ENCODE measurements at regions of chr6 and their contacts with region 1.

Region 1: GRCh38 chr6:113858480-113859348 is 1.6 kb downstream of the MARCKS start:
- DNase-seq: peak; percentile 95
- CTCF ChIP-seq: peak; percentile 93

Region 2: DNA sequence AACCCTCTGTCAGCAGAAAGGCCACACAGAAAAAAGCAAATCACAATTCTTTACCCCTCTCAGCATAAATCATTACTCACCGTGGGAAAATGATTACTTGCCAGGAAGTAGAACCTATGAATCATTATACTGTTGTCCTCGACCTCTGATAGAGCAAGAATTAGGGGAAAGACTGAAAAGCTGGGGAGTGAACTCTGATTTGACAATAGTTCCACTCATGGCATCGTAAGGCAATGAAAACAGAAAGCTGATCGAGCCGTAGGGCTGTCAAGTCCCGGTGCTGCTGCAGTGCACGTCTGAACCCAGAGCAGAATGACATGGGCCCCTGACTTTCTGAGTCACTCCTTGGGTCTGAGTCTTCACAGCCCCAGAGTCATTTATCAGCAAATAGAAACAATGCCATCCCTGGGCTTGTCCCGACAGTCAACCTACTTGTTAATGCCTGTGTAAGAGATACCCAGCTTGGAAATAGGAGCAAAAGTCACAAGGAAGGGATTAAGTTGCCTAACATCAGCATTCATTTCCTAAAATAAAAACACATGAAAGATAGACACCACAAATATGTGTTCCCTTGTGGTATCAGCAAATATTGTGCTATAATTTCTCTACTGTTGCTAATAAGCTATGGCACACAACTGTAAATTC is 226.4 kb before region 1 on chr6:
- CTCF ChIA-PET with region 1: interaction called, 37 read pairs
- POLR2A ChIA-PET with region 1: interaction called, 12 read pairs
- DNase-seq: no peak
- CTCF ChIP-seq: no peak

Region 3: GRCh38 chr6:113655761-113656160 is 203.0 kb before region 1 on chr6:
- CTCF ChIA-PET with region 1: interaction called, 11 read pairs
- POLR2A ChIA-PET with region 1: interaction called, 3 read pairs
- DNase-seq: no peak
- CTCF ChIP-seq: no peak

Region 4: DNA sequence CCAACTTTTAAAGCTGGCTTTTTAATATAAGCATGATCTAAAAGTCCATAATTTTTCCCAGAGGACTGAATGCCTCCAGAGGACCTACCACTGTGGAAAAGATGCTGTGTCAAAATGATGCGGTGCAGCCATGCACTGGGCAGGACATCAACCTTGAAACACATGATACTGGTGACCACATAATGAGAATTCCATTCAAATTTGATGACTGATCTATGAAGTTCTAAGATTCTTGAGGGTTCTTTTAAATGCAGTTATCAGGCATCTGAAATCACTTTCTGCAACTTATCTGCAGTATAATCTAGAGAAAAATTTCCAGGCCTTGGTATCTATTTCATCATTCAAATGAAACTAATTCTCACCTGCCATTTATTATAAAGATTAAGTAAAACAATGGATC is 16.6 kb before region 1 on chr6:
- CTCF ChIA-PET with region 1: interaction called, 16 read pairs
- POLR2A ChIA-PET with region 1: no interaction called
- DNase-seq: no peak
- CTCF ChIP-seq: no peak

Region 5: DNA sequence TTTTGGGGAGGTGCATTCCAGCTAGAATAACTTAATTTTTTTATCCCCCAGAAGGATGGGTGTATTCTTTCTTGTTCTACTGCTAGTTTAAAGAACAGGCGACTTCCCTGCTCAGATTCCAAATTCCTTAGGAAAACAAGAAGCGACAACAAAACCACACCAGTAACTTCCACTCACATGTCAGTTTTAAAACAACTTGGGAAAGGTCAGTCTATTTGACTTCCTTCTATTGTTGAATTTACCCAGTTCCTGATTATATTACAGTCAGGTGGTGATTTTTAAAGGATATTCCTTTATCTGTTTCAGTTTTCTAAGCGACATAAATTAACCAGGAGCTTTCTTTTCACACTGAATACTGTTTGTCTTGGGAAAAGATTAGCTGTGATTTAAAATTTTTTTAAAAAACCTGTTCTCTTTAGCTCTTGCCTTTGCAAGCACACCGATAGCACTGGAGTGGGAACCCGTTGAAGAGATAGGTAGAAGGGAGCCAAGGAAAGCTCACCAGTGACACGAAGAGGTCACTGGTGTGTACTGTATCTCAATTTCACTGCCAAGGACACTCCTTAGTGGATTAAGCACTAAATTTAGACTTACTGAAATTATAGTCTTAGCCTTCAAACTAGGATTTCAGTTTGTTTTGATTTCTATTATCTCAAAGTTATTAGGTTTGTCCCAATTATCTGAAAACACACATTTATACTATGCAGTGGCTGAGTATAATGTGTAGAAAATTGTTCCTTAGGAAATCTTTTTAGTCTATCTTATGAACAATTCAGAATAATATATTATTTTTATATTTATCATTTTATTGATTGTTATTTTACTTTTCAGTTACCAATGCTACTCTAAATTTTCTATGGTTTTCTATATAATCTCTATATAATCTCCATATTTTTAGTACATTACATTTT is 20.7 kb after region 1 on chr6:
- CTCF ChIA-PET with region 1: interaction called, 31 read pairs
- POLR2A ChIA-PET with region 1: no interaction called
- DNase-seq: peak; percentile 52
- CTCF ChIP-seq: peak; percentile 81

Region 6: DNA sequence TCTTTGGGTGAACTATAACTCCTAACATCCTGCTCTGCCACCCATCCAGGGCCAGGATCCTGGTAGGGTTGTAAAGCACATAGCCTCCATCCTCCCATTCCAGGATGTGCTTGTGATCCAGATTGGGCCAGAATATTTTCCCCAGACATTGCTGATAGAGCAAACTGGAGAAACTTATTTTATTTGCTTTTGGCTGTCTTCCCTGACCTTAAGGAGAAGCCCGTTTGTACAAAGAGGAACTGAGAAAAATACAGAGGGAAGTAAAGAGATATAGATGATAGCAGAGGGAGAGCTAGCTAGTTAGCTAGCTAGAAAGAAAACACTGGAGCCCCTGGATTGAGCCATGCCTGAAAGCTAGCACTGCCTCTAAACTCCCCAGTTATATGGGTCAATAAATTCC is 121.2 kb after region 1 on chr6:
- CTCF ChIA-PET with region 1: no interaction called
- POLR2A ChIA-PET with region 1: no interaction called
- DNase-seq: peak; percentile 26
- CTCF ChIP-seq: no peak

Region 7: GRCh38 chr6:114068771-114069170 is 210.1 kb after region 1 on chr6:
- CTCF ChIA-PET with region 1: no interaction called
- POLR2A ChIA-PET with region 1: no interaction called
- DNase-seq: no peak
- CTCF ChIP-seq: no peak

Measured in GM10248 (cell line).